CD8-positive, alpha-beta memory T cell (primary cell): ENCODE measurements at regions of chr19 and their contacts with region 1.

Region 1: DNA sequence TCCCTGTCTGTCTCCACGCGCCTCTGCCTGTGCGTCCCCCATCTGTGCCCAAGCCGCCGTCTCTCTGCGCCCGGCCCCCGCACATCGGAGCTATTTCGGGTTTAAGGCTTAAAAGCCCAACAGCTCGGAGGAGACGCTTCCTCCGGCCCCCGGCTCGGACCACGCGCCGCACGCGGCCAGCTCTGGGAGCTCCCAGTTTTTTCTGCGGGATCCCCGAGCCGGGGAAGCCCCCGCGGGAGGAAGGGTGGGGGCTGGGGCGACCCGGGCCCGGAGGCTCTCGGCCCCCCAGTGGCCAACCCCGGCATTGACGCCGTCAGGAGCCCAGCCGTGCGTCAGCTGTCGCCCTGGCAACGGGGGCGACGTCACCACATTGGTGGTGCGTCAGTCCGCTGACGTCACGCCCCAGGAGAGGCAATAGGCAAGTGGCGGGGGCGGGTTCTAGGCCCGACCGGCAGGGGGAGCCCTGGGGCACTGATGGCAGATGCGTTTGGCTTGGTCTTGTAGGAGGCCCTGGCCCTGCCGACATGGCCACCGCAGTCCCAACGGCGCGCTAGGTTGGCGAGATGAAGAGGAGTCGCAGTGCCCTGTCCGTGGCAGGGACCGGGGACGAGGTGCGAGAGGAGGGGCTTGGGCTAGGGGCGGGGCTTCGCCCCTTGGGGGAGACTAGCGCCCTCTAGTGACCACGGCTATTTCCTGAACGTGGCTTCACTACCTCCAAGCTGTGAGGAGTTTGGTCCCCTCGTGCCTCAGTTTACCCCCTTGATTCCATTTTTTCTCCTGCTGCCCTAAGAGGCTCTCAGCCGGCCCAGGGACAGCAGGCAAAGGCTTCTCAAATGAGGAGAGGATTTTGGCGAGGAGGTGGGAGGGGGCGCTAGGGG is 3.7 kb upstream of the PDE4A start:
- DNase-seq: peak; percentile 96 to 100 (median 98)
- H3K4me3 ChIP-seq: peak overlapping the region; percentile 64
- H3K4me3 Mint-ChIP-seq: peak overlapping the region; percentile 52 to 79 (median 71)
- H3K27ac ChIP-seq: peak overlapping the region; percentile 71
- H3K27ac Mint-ChIP-seq: peak overlapping the region; percentile 77 to 98 (median 94)
- H3K4me1 ChIP-seq: peaks cover 60% of the 10 kb centered on the region
- H3K4me1 Mint-ChIP-seq: peaks cover 50 to 67% (median 56%) of the 10 kb centered on the region in 3 donors
- H3K27me3 ChIP-seq: peaks cover 40% of the 10 kb centered on the region
- H3K27me3 Mint-ChIP-seq: peaks cover 31 to 32% of the 10 kb centered on the region in 2 donors

Region 2: GRCh38 chr19:10346509-10346908 is 70.1 kb before region 1 on chr19:
- CTCF ChIA-PET with region 1: no interaction called
- POLR2A ChIA-PET with region 1: no interaction called
- DNase-seq: no peak
- H3K4me3 ChIP-seq: no peak overlapping the region
- H3K4me3 Mint-ChIP-seq: no peak overlapping the region
- H3K27ac ChIP-seq: no peak overlapping the region
- H3K27ac Mint-ChIP-seq: no peak overlapping the region
- H3K4me1 ChIP-seq: no peaks in the 10 kb centered on the region
- H3K4me1 Mint-ChIP-seq: no peaks in the 10 kb centered on the region
- H3K27me3 ChIP-seq: no peaks in the 10 kb centered on the region
- H3K27me3 Mint-ChIP-seq: no peaks in the 10 kb centered on the region

Region 3: GRCh38 chr19:10403137-10404021 is 13.2 kb before region 1 on chr19 and contains the start of gene CDC37:
- CTCF ChIA-PET with region 1: interaction called, 788 read pairs
- POLR2A ChIA-PET with region 1: interaction called, 7 read pairs
- DNase-seq: peak; percentile 96 to 98 (median 97)
- H3K4me3 ChIP-seq: peak within 1 kb of the TSS; percentile 99
- H3K4me3 Mint-ChIP-seq: peak within 1 kb of the TSS; percentile 88 to 99 (median 96)
- H3K27ac ChIP-seq: peak within 1 kb of the TSS; percentile 98
- H3K27ac Mint-ChIP-seq: peak within 1 kb of the TSS; percentile 97 to 100 (median 99)
- H3K4me1 ChIP-seq: peaks cover 69% of the 10 kb centered on the region
- H3K4me1 Mint-ChIP-seq: peaks cover 60 to 84% (median 70%) of the 10 kb centered on the region in 3 donors
- H3K27me3 ChIP-seq: no peaks in the 10 kb centered on the region
- H3K27me3 Mint-ChIP-seq: peaks cover 0 to 11% of the 10 kb centered on the region in 2 donors
- total RNA-seq, gene CDC37: 273 to 277 TPM

Region 4: DNA sequence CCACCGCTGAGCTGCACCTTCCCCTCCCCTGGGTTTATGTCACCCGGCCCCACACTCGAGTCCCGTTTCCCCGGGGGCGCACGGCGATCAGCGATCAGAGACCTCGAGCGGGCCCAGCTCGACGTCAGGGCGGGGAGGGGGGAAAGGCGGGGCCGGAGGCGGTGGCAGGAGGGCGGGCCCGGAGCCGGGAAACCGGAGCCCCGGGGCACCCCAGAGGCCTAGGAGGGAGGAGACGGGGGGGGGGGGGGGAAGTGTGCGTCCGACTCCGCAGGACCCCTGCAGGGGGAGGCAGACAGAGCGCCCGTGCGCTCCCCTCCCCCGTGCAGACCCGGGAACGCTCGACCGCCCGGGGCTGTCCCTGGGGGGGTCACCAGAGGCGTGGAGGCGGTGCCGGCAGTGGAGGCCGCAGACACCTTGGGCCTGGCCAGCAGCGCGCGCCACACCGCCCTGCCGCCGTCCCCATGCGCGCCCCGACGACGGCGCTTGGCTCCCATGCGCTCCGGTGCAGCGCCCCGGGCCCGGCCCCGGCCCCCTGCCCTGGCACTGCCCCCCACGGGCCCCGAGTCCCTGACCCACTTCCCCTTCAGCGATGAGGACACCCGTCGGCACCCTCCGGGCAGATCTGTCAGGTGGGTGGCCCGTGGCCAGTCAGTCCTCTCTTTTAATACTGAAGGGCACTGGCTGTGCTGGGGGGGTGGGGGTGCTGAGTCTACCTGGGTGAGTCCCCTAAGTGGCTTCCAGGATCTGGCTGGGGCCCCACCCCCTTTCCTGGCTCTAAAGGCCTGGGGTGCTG is 15.5 kb after region 1 on chr19:
- CTCF ChIA-PET with region 1: interaction called, 788 read pairs
- POLR2A ChIA-PET with region 1: interaction called, 14 read pairs
- DNase-seq: peak; percentile 61 to 86 (median 74)
- H3K4me3 ChIP-seq: peak overlapping the region; percentile 45
- H3K4me3 Mint-ChIP-seq: peak overlapping the region; percentile 71 to 95 (median 89)
- H3K27ac ChIP-seq: peak overlapping the region; percentile 85
- H3K27ac Mint-ChIP-seq: peak overlapping the region; percentile 90 to 100 (median 99)
- H3K4me1 ChIP-seq: peaks cover 45% of the 10 kb centered on the region
- H3K4me1 Mint-ChIP-seq: peaks cover 52 to 71% (median 53%) of the 10 kb centered on the region in 3 donors
- H3K27me3 ChIP-seq: peaks cover 4% of the 10 kb centered on the region
- H3K27me3 Mint-ChIP-seq: peaks cover 5 to 8% of the 10 kb centered on the region in 2 donors